H1 (cell line): ENCODE measurements at regions of chr9 and their contacts with region 1.

Region 1: GRCh38 chr9:132412089-132412488 is 2.1 kb downstream of the CFAP77 start:
- DNase-seq: peak in 1 of 2 experiments; percentile 69
- H3K4me3 ChIP-seq: no peak overlapping the region
- H3K27ac ChIP-seq: no peak overlapping the region
- H3K4me1 ChIP-seq: peaks cover 6 to 15% (median 6%) of the 10 kb centered on the region in 4 experiments; a peak in 6 of 7 replicates
- H3K27me3 ChIP-seq: peaks cover 1 to 20% (median 13%) of the 10 kb centered on the region in 4 experiments; a peak in 6 of 7 replicates
- CTCF ChIP-seq: peak; percentile 66 to 83 (median 81)
- EP300 ChIP-seq: no peak
- POLR2A ChIP-seq: no peak
- RAD21 ChIP-seq: peak; percentile 83 to 87

Region 2: GRCh38 chr9:132372177-132373095 is 39.7 kb before region 1 on chr9:
- CTCF ChIA-PET with region 1: no interaction called
- POLR2A ChIA-PET with region 1: no interaction called
- DNase-seq: no peak
- H3K4me3 ChIP-seq: no peak overlapping the region
- H3K27ac ChIP-seq: no peak overlapping the region
- H3K4me1 ChIP-seq: no peaks in the 10 kb centered on the region
- H3K27me3 ChIP-seq: no peaks in the 10 kb centered on the region
- CTCF ChIP-seq: no peak
- EP300 ChIP-seq: no peak
- POLR2A ChIP-seq: no peak
- RAD21 ChIP-seq: no peak

Region 3: DNA sequence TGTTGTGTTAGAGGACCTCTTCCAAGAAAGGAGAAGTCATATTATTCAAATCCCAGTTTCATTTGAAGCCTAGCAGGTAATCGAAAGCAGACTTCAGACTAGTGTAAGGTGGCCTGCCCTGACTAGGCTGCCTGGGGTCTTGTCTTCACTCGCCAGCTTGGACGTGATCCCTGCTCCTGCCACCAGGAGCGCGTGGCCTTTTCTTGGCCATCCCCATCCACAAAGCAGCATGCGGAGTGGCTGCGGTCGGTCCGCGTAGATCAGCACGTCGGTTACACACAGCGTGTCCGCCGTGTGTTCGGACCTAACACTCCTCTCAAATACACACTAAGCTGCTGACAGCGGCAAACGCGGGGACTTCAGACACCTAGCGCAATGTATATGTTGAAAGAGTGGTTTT is 35.3 kb after region 1 on chr9:
- CTCF ChIA-PET with region 1: interaction called, 17 read pairs
- POLR2A ChIA-PET with region 1: no interaction called
- DNase-seq: peak; percentile 5 to 71
- H3K4me3 ChIP-seq: no peak overlapping the region
- H3K27ac ChIP-seq: no peak overlapping the region
- H3K4me1 ChIP-seq: peaks cover 0 to 2% (median 0%) of the 10 kb centered on the region in 4 experiments; a peak in 1 of 7 replicates
- H3K27me3 ChIP-seq: peaks cover 0 to 2% (median 0%) of the 10 kb centered on the region in 4 experiments; a peak in 1 of 7 replicates
- CTCF ChIP-seq: peak; percentile 62 to 90 (median 87)
- EP300 ChIP-seq: no peak
- POLR2A ChIP-seq: no peak
- RAD21 ChIP-seq: peak; percentile 35 to 42; a peak in 3 of 4 replicates

Region 4: GRCh38 chr9:132498531-132499210 is 86.6 kb after region 1 on chr9:
- CTCF ChIA-PET with region 1: interaction called, 71 read pairs
- POLR2A ChIA-PET with region 1: no interaction called
- DNase-seq: no peak
- H3K4me3 ChIP-seq: no peak overlapping the region
- H3K27ac ChIP-seq: no peak overlapping the region
- H3K4me1 ChIP-seq: peaks cover 0 to 3% (median 0%) of the 10 kb centered on the region in 4 experiments; a peak in 2 of 7 replicates
- H3K27me3 ChIP-seq: no peaks in the 10 kb centered on the region
- CTCF ChIP-seq: no peak
- EP300 ChIP-seq: no peak
- POLR2A ChIP-seq: no peak
- RAD21 ChIP-seq: no peak

Region 5: DNA sequence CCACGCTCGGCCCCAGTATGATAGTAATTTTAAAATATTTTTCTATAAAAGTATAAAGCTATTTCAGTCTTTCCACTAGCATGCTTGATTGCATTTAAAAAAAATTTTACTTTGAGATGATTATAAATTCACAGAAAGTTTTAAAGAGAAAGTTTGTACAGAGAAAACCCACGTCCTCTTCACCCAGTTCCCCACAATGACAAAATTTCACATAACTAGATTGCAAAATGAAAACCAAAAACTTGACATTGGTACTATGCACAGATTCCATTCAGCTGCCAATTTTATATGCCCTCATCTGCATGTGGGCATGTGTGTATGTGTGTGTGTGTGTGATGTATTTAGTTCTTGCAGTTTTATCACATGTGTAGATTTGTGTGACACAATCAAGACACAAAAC is 113.2 kb after region 1 on chr9:
- CTCF ChIA-PET with region 1: no interaction called
- POLR2A ChIA-PET with region 1: no interaction called
- DNase-seq: no peak
- H3K4me3 ChIP-seq: no peak overlapping the region
- H3K27ac ChIP-seq: no peak overlapping the region
- H3K4me1 ChIP-seq: no peaks in the 10 kb centered on the region
- H3K27me3 ChIP-seq: no peaks in the 10 kb centered on the region
- CTCF ChIP-seq: no peak
- EP300 ChIP-seq: no peak
- POLR2A ChIP-seq: no peak
- RAD21 ChIP-seq: no peak

Region 6: GRCh38 chr9:132546148-132547051 is 134.3 kb after region 1 on chr9:
- CTCF ChIA-PET with region 1: interaction called, 12 read pairs
- POLR2A ChIA-PET with region 1: no interaction called
- DNase-seq: peak; percentile 34 to 90
- H3K4me3 ChIP-seq: peak overlapping the region; percentile 8 to 55 (median 46); a peak in 7 of 8 replicates
- H3K27ac ChIP-seq: no peak overlapping the region
- H3K4me1 ChIP-seq: peaks cover 0 to 4% (median 4%) of the 10 kb centered on the region in 4 experiments; a peak in 4 of 7 replicates
- H3K27me3 ChIP-seq: no peaks in the 10 kb centered on the region; a peak in 1 of 7 replicates
- CTCF ChIP-seq: peak; percentile 65 to 78 (median 72)
- EP300 ChIP-seq: no peak
- POLR2A ChIP-seq: no peak
- RAD21 ChIP-seq: peak; percentile 30 to 49

Region 7: DNA sequence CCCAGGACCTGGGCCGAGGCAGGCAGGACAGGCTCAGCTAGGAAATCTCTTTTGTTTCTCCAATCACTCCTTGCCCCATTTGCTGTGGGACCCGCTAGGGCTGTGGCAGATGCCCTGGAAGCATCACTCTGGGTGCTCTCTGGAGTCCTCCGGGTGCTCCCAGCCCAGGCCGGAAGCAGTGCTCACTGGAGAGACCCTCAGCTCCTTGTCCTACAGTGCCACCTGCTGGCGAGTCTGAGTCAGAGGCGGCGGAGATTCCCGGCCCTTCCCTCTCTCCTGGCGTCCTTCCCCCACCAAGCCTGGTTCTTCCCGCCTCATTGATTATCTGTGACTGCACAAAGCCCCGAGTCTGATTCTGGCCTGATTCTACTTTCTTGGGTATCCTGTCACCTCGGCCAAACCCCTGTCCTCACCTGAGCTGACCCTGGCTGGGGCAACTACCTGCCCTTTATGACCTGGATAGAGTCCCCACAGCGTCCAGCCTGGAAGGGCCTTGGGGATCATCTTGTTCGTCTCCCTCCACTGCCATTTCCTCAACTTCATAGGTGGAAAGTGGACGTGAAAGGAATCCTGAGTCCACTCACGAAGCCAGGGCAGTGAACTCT is 163.0 kb after region 1 on chr9:
- CTCF ChIA-PET with region 1: interaction called, 26 read pairs
- POLR2A ChIA-PET with region 1: no interaction called
- DNase-seq: peak in 1 of 2 experiments; percentile 90
- H3K4me3 ChIP-seq: no peak overlapping the region
- H3K27ac ChIP-seq: no peak overlapping the region
- H3K4me1 ChIP-seq: peaks cover 0 to 9% (median 7%) of the 10 kb centered on the region in 4 experiments; a peak in 5 of 7 replicates
- H3K27me3 ChIP-seq: peaks cover 29 to 50% (median 49%) of the 10 kb centered on the region in 4 experiments
- CTCF ChIP-seq: peak; percentile 89 to 98 (median 91)
- EP300 ChIP-seq: no peak
- POLR2A ChIP-seq: no peak
- RAD21 ChIP-seq: peak; percentile 99